ENCODE measurements at regions of chr6 and their contacts with region 1.

Region 1: DNA sequence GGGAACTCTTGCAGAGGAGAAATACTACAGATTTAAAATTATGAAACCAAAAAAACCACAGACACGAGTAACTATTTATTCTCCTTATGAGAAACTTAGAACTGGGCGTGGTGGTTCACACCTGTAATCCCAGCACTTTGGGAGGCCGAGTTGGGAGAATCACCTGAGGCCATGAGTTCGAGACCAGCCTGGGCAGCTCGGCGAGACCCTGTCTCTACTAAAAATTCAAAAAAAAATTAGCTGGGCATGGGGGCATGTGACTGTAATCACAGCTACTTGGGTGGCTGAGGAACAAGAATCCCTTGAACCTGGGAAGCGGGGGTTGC is 36.8 kb downstream of the SSR1 start:
- DNase-seq: no peak
- H3K4me3 Mint-ChIP-seq: no peak overlapping the region
- H3K27ac Mint-ChIP-seq: no peak overlapping the region
- H3K4me1 Mint-ChIP-seq: peaks cover 2% of the 10 kb centered on the region
- H3K27me3 Mint-ChIP-seq: no peaks in the 10 kb centered on the region

Region 2: GRCh38 chr6:6661684-6662083 is 614.5 kb before region 1 on chr6:
- intact Hi-C with region 1: no loop called
- DNase-seq: no peak
- H3K4me3 Mint-ChIP-seq: no peak overlapping the region
- H3K27ac Mint-ChIP-seq: no peak overlapping the region
- H3K4me1 Mint-ChIP-seq: peaks cover 64% of the 10 kb centered on the region
- H3K27me3 Mint-ChIP-seq: no peaks in the 10 kb centered on the region

Region 3: DNA sequence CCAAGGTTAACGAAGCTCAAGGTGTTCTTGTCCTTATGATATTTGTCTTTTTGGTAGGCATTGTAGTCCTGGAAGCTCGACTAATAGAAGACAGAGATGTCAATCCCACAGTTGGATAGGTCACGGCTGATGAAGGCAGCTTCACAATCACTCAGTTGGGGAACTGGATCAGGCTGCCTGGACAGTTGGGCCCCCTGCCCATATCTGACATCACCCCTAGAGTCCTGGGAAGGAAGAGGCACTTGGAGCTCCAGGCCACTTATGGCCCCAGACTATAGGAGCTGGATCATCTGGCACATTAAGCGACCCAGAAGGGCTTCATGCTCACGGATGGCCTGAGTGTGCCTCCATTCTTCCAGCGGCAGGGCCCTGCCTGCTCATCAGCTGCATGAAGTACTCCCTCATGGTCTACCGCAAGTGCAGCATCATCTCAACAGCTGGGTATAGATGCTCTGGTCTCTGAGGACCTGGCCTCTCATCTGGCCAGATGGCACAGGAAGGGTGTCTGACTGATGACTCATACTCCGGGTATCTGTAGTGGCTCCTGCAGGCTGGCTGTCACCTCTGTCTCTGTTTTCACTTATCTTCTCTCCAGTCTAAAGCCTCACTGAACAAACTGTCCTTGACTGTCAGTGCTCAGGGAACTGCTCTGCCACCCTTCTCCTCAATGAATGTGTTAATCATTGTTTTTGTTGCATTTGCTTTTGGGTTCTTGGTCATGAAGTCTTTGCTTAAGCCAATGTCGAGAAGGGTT is 66.0 kb after region 1 on chr6:
- intact Hi-C with region 1: loop called (anchors 1 kb)
- DNase-seq: no peak
- H3K4me3 Mint-ChIP-seq: no peak overlapping the region
- H3K27ac Mint-ChIP-seq: no peak overlapping the region
- H3K4me1 Mint-ChIP-seq: peaks cover 6% of the 10 kb centered on the region
- H3K27me3 Mint-ChIP-seq: peaks cover 31% of the 10 kb centered on the region

Region 4: DNA sequence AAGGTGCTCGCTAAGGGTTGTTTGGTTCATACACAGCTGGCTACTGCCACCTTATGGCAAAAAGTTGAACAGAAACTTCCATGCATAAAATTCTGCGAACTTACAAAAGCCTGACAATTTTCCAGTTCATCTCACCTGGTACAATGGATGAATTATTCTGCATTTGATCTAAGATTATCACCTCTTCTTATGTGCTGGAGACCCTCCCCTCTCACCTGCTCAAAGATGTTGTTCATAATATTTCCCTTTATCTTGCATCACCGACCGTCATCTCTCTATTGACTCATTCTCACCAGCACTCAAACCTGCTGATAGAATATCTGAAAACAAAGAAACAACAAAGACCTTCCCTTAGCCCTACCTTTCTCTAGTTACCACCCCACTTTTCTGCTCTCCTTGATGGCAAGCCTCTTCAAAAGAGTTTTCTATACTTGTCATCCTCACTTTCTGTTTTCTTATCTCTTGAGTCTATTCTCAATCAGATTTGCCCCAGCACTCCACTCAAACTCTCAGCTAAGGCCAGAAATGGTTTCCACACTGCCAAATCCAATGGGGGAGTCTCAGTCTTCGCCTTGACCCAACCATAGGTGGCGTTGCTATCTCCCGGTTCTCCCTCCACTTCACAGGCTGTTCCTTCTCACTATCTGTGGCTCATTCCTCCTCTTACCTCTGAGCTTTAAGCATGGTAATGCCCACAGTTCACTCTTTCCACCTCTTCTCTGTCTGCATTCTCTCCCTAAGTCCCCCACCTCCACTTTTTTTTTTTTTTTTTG is 339.6 kb after region 1 on chr6:
- intact Hi-C with region 1: loop called (anchors 1 kb)
- DNase-seq: no peak
- H3K4me3 Mint-ChIP-seq: no peak overlapping the region
- H3K27ac Mint-ChIP-seq: no peak overlapping the region
- H3K4me1 Mint-ChIP-seq: peaks cover 18% of the 10 kb centered on the region
- H3K27me3 Mint-ChIP-seq: peaks cover 3% of the 10 kb centered on the region

Region 5: DNA sequence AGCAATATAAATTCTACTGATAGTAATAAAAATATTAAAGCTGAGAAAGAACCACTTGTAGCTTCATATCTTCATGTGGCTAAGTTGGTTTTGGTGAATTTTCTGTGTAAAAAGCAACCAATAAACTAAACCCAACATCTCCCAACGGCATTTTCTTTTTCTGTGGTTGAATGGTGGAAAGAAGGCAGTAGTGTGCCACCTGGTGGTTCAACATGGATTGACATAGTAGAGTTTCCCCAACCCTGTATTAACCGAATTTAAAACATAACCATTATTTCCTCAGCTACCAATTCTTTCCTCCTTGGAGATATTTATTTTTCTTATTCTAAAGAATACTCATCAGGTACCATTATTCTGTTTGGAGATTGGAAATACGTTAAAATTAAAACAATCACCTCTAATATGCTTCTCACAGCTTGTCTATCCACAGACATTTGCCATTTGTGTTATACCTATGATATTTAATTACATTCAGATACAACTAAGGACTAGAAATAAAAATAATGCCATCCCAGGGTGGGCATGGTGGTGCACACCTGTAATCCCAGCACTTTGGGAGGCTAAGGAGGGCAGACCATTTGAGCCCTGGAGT is 943.3 kb after region 1 on chr6:
- intact Hi-C with region 1: loop called (anchors 5 kb)
- DNase-seq: peak; percentile 5
- H3K4me3 Mint-ChIP-seq: no peak overlapping the region
- H3K27ac Mint-ChIP-seq: no peak overlapping the region
- H3K4me1 Mint-ChIP-seq: no peaks in the 10 kb centered on the region
- H3K27me3 Mint-ChIP-seq: no peaks in the 10 kb centered on the region